SK-N-SH (cell line): ENCODE measurements at regions of chr1 and their contacts with region 1.

Region 1: DNA sequence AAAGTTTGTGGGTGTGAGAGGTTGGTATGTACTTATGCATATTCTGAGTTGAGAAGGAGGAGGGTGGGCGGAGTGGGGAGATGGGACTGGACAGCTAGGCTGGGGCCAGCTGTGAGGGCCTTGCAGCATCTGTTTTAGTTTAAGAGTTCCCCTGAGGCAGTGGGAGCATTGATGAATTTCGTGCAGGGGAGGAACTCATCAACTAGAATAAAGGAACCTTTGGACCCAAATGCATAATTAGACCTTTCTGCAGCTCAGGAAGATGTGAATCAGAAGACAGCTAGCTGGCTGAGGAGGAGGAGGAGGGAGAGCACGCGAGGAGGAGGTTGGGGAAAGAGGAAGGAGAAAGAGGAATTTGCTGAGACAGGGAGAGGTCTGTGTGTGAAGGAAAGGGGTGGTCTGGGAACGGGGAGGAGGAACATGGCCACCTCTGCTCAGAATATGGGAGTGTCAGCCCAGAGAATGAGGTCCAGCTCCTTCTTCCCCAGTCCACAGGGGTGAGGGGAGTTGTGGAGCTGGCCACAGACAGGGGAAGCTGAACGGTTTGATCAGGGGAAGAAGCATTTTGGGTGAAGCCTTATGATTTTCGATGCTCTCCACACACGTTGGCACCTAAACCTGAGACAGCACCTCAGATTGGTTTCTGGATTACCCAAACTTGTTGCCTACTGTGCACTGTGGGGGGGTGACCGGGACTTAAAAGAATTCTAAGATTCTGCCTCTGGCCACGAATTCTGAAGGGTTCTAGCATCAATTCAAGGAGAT is 27.7 kb downstream of the MYOG start:
- DNase-seq: peak; percentile 83
- H3K4me3 ChIP-seq: no peak overlapping the region
- H3K27ac ChIP-seq: no peak overlapping the region
- H3K4me1 ChIP-seq: peaks cover 0 to 22% of the 10 kb centered on the region in 2 experiments; a peak in 1 of 4 replicates
- H3K27me3 ChIP-seq: no peaks in the 10 kb centered on the region
- CTCF ChIP-seq: no peak
- EP300 ChIP-seq: no peak
- RAD21 ChIP-seq: no peak

Region 2: DNA sequence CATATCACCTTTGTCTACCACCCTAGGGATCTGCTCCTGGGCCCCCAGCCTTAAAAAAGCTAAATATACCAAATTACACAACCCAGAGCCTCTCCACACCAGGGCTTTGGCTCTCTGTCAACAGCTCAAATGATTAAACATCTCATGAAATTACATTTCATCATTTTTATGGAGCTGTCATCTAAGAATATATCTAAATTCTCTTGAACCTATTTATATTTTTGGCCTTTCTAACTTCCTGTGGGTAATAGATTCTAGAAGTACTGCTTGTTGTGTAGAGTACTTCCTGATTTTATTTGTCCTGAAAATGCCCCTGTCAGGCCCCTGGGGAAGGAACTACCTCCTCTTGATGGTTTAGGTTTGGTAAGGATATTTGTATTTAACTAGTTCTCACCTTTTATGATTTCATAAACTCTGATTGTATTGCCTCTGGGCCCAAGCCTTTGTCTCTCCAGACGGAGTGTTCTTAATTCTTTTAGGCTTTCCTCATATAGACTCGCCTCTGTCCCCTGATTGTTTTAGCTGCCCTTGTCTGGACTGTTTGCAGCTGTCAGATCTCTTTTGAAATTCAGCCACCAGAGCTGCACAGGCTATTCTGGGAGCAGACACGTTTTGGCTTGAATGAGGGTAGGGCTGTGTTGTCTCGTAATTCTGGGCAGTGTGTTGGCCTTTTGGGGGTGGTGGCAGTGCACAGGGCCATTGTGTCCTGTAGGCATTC is 11.1 kb after region 1 on chr1:
- CTCF ChIA-PET with region 1: interaction called, 10 read pairs
- POLR2A ChIA-PET with region 1: no interaction called
- DNase-seq: peak; percentile 63
- H3K4me3 ChIP-seq: no peak overlapping the region
- H3K27ac ChIP-seq: peak overlapping the region in 1 of 2 experiments; percentile 87; a peak in 2 of 4 replicates
- H3K4me1 ChIP-seq: peaks cover 0 to 19% of the 10 kb centered on the region in 2 experiments; a peak in 2 of 4 replicates
- H3K27me3 ChIP-seq: no peaks in the 10 kb centered on the region
- CTCF ChIP-seq: no peak
- EP300 ChIP-seq: no peak
- RAD21 ChIP-seq: no peak

Region 3: GRCh38 chr1:203186446-203187303 is 128.6 kb after region 1 on chr1 and contains the start of gene CHI3L1:
- CTCF ChIA-PET with region 1: no interaction called
- POLR2A ChIA-PET with region 1: no interaction called
- DNase-seq: no peak
- H3K4me3 ChIP-seq: no peak within 1 kb of the TSS
- H3K27ac ChIP-seq: no peak within 1 kb of the TSS
- H3K4me1 ChIP-seq: peaks cover 0 to 13% of the 10 kb centered on the region in 2 experiments; a peak in 1 of 4 replicates
- H3K27me3 ChIP-seq: no peaks in the 10 kb centered on the region
- CTCF ChIP-seq: no peak
- EP300 ChIP-seq: no peak
- RAD21 ChIP-seq: no peak
- polyA plus RNA-seq, gene CHI3L1: not detected in 2 replicates

Region 4: GRCh38 chr1:203252678-203253077 is 194.6 kb after region 1 on chr1:
- CTCF ChIA-PET with region 1: no interaction called
- POLR2A ChIA-PET with region 1: no interaction called
- DNase-seq: no peak
- H3K4me3 ChIP-seq: no peak overlapping the region
- H3K27ac ChIP-seq: no peak overlapping the region
- H3K4me1 ChIP-seq: no peaks in the 10 kb centered on the region
- H3K27me3 ChIP-seq: no peaks in the 10 kb centered on the region
- CTCF ChIP-seq: no peak
- EP300 ChIP-seq: no peak
- RAD21 ChIP-seq: no peak